Prostate gland (tissue), 2 donors: ENCODE measurements at regions of chr1 and their contacts with region 1.

Region 1: DNA sequence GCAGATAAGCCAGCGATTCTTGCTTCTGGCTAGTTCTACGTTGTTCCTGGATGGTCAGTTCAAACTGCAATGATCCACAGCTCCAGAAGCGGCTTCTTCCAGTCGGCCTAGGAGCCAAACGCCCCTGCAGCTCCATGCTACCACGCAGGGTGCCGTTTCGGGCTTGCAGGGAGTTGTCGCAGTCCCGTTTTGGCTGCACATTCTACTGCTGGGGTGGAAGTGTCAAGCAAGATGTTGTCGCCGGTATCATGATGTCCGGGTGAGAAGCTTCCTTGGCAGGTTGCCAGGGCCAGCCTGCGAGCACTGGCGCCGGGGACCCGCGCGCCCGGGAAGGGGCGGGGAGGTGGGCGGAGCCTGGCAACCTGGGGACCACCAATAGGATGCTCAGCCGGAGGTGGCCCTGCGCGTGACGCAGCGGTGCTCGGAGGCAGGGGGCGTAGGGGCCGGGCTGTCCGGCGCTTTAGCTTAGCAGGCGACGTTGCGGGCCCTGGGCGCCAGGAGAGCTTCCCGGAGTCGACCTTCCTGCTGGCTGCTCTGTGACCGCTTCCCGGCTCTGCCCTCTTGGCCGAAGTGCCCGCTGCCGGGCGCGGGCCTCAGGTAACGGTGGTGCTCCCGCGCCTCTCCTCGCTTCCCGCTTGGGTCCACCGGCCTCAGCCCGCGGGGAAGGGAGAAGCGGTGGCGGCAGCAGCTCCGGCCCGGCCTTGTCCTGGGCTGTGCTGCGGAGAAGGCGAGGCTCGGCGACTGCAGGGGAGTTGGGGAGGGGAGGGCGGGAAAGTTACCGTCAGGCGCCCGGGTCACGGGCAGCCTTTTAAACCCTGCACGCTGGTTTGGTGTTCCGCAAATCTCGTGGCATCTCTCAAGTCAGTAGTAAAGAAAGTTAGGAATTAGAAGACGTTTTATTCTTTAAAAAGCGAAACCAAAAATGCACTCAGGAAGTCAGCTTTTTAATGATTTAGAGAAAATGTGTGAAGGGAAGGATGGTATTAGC is at the start of gene SOAT1:
- DNase-seq: peak; percentile 95
- H3K4me3 ChIP-seq: peak within 1 kb of the TSS; percentile 75 to 84
- H3K27ac ChIP-seq: peak within 1 kb of the TSS; percentile 94 to 96
- H3K4me1 ChIP-seq: peaks cover 10% of the 10 kb centered on the region
- H3K27me3 ChIP-seq: no peaks in the 10 kb centered on the region
- CTCF ChIP-seq: peak in 3 of 4 experiments; percentile 14 to 55 (median 47)
- POLR2A ChIP-seq: peak; percentile 88
- total RNA-seq, gene SOAT1: 30.9 to 47.2 TPM

Region 2: GRCh38 chr1:179365320-179366092 is 71.9 kb after region 1 on chr1 and contains the start of gene AXDND1:
- intact Hi-C with region 1: loop called (anchors 1 kb)
- DNase-seq: peak; percentile 75
- H3K4me3 ChIP-seq: peak within 1 kb of the TSS; percentile 48 to 57
- H3K27ac ChIP-seq: peak within 1 kb of the TSS; percentile 89 to 93
- H3K4me1 ChIP-seq: no peaks in the 10 kb centered on the region
- H3K27me3 ChIP-seq: no peaks in the 10 kb centered on the region
- CTCF ChIP-seq: peak in 2 of 4 experiments; percentile 20 to 32
- POLR2A ChIP-seq: peak; percentile 40
- total RNA-seq, gene AXDND1: 7.0 TPM in 1 of 2 donors, not detected in the other